Lower leg skin (tissue), 4 donors: ENCODE measurements at regions of chr19 and their contacts with region 1.

Region 1: DNA sequence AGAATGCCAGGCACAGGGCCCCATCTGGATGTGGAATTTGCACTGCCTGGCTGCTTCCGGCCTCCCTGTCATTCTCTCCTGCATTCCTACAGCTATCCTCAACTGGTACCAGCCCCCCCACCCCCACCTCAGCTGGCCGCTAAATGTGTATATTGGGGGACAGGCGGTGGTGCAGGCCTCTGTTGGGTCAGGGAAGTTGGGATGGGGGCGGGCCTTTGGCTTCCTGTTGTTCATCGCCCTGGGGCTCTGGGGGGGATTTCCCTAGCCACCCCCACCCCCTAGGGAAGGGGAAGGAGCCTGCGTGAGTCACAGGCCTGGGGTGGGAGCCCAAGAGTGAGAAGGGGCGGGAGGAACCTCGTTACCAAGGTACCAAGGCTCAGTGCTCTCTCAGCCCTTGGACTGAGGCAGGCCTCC is 10.6 kb downstream of the POU2F2 start:
- DNase-seq: peak in 1 of 2 donors; percentile 88
- H3K4me3 ChIP-seq: no peak overlapping the region
- CTCF ChIP-seq: no peak
- POLR2A ChIP-seq: no peak

Region 2: GRCh38 chr19:41928221-41928683 is 193.4 kb before region 1 on chr19 and contains the start of gene ERFL:
- intact Hi-C with region 1: no loop called
- DNase-seq: no peak
- H3K4me3 ChIP-seq: no peak within 1 kb of the TSS
- CTCF ChIP-seq: no peak
- POLR2A ChIP-seq: no peak
- total RNA-seq, gene ERFL: 0.16 TPM in 1 of 4 donors, not detected in the others

Region 3: GRCh38 chr19:42051166-42052118 is 70.2 kb before region 1 on chr19:
- intact Hi-C with region 1: no loop called
- DNase-seq: peak in 1 of 2 donors; percentile 72
- H3K4me3 ChIP-seq: no peak overlapping the region
- CTCF ChIP-seq: no peak
- POLR2A ChIP-seq: no peak

Region 4: GRCh38 chr19:42313096-42313839 is 191.6 kb after region 1 on chr19 and contains the start of gene TMEM145:
- intact Hi-C with region 1: loop called (anchors 10 kb)
- DNase-seq: no peak
- H3K4me3 ChIP-seq: peak within 1 kb of the TSS; percentile 31
- CTCF ChIP-seq: no peak
- POLR2A ChIP-seq: no peak
- total RNA-seq, gene TMEM145: 0.88 TPM in 1 of 4 donors, not detected in the others